Right ventricle myocardium inferior (tissue), 1 donor: ENCODE measurements at regions of chr12 and their contacts with region 1.

Region 1: DNA sequence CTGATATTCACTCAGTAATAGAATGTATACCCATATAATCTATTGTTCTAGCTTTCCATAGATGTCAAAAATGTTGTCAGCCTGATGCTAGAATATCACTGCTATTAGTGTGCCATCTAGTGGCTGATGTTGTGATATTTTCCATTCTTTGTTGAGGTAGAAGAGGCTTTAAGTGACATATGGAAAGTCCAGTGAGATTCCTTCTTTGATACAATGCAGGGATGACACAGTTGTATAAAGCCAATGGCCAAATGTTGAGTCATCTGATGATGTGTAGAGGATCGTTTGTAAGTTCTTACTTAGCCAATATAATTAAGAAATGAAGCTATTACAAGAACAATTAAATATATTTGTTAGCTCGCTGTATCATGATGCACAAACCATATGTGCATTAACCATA is 58.1 kb upstream of the PCED1B start:
- DNase-seq: no peak
- ATAC-seq: no peak

Region 2: GRCh38 chr12:46342562-46343033 is 678.7 kb before region 1 on chr12:
- intact Hi-C with region 1: loop called (anchors 5 kb)
- DNase-seq: no peak
- ATAC-seq: peak; percentile 76

Region 3: DNA sequence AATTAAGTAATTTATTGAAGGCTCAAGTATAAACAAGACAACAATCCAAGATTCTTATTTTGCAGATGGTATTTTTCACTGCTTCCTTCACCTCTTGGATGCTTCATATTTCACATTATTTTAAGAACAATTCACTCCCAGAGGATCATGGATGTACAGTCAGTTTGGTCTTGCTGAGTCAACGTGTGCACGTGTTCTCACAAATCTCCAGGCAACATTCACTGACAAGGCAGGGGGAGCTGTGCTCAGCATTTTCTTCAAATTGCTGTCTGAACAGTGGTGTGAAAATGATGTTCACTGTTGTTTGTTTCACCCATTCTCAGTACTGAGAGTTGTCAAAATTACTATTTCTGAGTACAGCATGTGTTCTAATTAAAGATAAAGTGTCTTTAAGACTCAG is 77.2 kb before region 1 on chr12:
- intact Hi-C with region 1: loop called (anchors 10 kb)
- DNase-seq: no peak
- ATAC-seq: no peak

Region 4: DNA sequence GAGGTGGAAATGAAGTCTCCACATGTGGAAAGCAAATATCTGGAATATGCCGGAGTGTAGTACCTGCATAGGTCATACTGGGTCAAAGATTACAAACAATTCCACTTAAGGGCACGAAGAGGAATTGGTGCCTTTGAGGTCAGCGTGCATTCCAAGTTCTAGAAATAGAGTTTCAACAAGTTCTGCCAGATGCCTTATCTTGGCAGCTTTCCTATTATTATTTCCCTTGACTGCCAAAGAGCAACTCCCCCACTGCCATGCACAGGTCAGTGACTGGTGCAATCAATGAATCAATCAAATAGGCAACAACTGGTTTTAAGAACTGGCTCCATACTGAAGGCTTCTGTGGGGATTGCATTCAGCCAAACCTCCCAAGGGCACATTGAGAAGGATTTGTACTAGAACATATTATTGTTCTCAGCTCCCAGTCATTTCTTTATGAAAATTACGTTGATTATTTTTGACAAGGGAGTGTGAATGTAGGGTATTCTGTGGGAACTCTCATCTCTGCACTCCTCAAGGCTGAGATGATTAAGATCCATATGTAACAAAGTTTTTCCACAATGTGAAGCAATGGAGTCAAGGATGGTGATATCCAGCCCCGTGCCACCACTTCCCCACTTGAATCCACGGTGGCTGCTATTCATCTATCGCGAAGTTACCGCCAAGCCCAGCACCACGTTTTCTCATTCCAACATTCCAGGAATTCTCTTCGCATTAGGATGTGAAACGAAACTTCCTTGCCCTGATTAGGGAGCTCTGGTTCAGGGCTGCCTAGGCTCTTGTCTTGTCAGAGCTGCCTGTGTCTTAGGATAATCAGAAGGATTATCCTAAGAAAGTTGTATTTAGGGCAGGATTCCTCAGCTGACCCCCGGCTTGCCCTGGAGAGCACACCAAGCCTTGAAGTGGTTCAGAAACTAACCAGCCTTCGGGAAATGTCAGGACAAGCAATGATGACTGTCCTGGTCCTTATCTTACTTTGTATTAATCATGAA is 57.0 kb before region 1 on chr12:
- intact Hi-C with region 1: no loop called
- DNase-seq: peak; percentile 49
- ATAC-seq: peak; percentile 68